ENCODE measurements at regions of chr13 and their contacts with region 1.

Region 1: DNA sequence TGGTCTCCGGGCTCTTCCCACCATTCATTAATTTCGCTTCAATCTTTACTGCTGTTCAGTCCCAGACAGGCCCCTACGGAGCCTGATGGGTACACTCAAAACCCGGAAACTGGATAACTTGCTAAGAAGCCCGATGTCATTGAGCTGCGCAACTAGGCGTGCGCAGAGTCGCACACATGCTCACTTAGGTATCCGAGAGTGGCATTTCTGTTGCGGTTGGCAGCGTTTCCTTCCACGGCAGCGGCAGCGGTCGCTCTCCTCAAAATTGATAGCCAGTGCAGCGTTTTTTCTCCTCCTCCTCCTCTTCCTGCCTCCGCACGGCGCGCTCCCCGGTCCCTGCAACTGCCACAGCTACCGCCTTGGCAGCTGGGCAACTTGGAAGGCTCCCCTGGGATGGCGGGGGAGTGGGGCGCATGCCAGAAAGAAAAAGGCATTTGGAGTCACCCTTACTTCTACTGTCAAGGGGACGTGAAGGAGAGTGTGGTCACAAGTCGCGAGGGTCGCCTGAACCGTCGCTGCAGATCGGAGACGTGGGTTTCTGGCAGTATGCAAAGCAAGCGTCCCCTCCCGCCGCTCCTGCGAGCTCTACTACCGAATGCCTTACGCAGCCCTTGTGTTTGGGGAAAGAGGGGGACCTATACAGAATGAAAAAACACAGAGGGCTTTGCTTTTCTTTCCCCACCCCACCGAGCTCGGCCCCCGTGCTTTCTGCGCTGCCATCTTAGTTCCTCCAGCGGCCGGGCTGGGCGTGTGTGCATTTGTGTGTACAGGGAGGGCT is 2.4 kb upstream of the MYCBP2 start:
- DNase-seq: peak; percentile 88
- H3K4me3 Mint-ChIP-seq: peak overlapping the region; percentile 88
- H3K27ac Mint-ChIP-seq: peak overlapping the region; percentile 93
- H3K4me1 Mint-ChIP-seq: peaks cover 38% of the 10 kb centered on the region
- H3K27me3 Mint-ChIP-seq: peaks cover 5% of the 10 kb centered on the region

Region 2: GRCh38 chr13:77026818-77027585 is 302.3 kb before region 1 on chr13 and contains the start of gene FBXL3:
- intact Hi-C with region 1: loop called (anchors 1 kb)
- DNase-seq: peak; percentile 78
- H3K4me3 Mint-ChIP-seq: peak within 1 kb of the TSS; percentile 94
- H3K27ac Mint-ChIP-seq: peak within 1 kb of the TSS; percentile 93
- H3K4me1 Mint-ChIP-seq: peaks cover 58% of the 10 kb centered on the region
- H3K27me3 Mint-ChIP-seq: no peaks in the 10 kb centered on the region
- total RNA-seq, gene FBXL3: 40.1 and 40.8 TPM in 2 replicates

Region 3: GRCh38 chr13:77291774-77292173 is 37.5 kb before region 1 on chr13:
- intact Hi-C with region 1: loop called (anchors 1 kb)
- DNase-seq: no peak
- H3K4me3 Mint-ChIP-seq: no peak overlapping the region
- H3K27ac Mint-ChIP-seq: no peak overlapping the region
- H3K4me1 Mint-ChIP-seq: peaks cover 41% of the 10 kb centered on the region
- H3K27me3 Mint-ChIP-seq: no peaks in the 10 kb centered on the region

Region 4: GRCh38 chr13:77345150-77345780 is 15.9 kb after region 1 on chr13:
- intact Hi-C with region 1: loop called (anchors 1 kb)
- DNase-seq: no peak
- H3K4me3 Mint-ChIP-seq: no peak overlapping the region
- H3K27ac Mint-ChIP-seq: peak overlapping the region; percentile 88
- H3K4me1 Mint-ChIP-seq: peaks cover 13% of the 10 kb centered on the region
- H3K27me3 Mint-ChIP-seq: peaks cover 3% of the 10 kb centered on the region

Region 5: DNA sequence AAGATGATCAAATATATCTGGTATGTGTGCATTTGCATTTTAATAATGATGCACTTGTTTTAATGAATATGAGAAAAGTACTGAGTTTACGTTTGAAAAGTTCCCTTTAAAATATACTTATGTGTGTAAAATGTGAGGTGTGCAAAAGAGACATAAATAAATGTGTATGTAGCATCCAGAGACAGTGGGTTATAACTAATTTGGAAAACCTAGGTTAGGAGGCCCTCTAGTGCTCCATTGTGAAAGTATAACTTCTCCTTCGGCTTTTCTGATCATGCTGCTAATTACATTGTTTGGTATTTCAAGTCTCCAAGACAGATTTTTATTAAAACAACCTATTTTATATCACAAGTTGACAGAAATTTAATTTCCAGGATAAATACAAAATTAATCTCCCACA is 236.3 kb after region 1 on chr13:
- intact Hi-C with region 1: loop called (anchors 5 kb)
- DNase-seq: no peak
- H3K4me3 Mint-ChIP-seq: no peak overlapping the region
- H3K27ac Mint-ChIP-seq: no peak overlapping the region
- H3K4me1 Mint-ChIP-seq: no peaks in the 10 kb centered on the region
- H3K27me3 Mint-ChIP-seq: peaks cover 8% of the 10 kb centered on the region

Measured in activated T-helper 1 cell treated with anti-CD3 and anti-CD28 coated beads, Interleukin-12 subunit alpha, Interleukin-12 subunit beta, Interleukin-2, Interleukin-4 antibody, amounts not matched to agents 30 ng/mL and 10 ng/mL and 1 ng/mL, durations not matched to agents 14 hours and 24 hours and 36 hours (primary cell).